Psoas muscle (tissue), 8 donors: ENCODE measurements at regions of chr3 and their contacts with region 1.

Region 1: GRCh38 chr3:45479621-45480035 is 91.3 kb downstream of the LARS2 start:
- DNase-seq: no peak
- ATAC-seq: no peak
- H3K4me3 ChIP-seq: no peak overlapping the region
- H3K27ac ChIP-seq: no peak overlapping the region
- H3K4me1 ChIP-seq: no peaks in the 10 kb centered on the region
- H3K27me3 ChIP-seq: no peaks in the 10 kb centered on the region
- CTCF ChIP-seq: no peak

Region 2: GRCh38 chr3:45409921-45410320 is 69.7 kb before region 1 on chr3:
- intact Hi-C with region 1: loop called in 1 of 2 experiments (anchors 10 kb)
- DNase-seq: no peak
- ATAC-seq: peak in 3 of 4 donors; percentile 56 to 82 (median 82)
- H3K4me3 ChIP-seq: no peak overlapping the region
- H3K27ac ChIP-seq: peak overlapping the region; percentile 0
- H3K4me1 ChIP-seq: peaks cover 15% of the 10 kb centered on the region
- H3K27me3 ChIP-seq: no peaks in the 10 kb centered on the region
- CTCF ChIP-seq: no peak